OCI-LY7 (cell line): ENCODE measurements at regions of chr6 and their contacts with region 1.

Region 1: GRCh38 chr6:16514249-16514648 is 247.0 kb downstream of the ATXN1 start:
- DNase-seq: no peak
- H3K4me3 ChIP-seq: no peak overlapping the region
- H3K27ac ChIP-seq: no peak overlapping the region
- H3K4me1 ChIP-seq: no peaks in the 10 kb centered on the region
- CTCF ChIP-seq: peak; percentile 56

Region 2: DNA sequence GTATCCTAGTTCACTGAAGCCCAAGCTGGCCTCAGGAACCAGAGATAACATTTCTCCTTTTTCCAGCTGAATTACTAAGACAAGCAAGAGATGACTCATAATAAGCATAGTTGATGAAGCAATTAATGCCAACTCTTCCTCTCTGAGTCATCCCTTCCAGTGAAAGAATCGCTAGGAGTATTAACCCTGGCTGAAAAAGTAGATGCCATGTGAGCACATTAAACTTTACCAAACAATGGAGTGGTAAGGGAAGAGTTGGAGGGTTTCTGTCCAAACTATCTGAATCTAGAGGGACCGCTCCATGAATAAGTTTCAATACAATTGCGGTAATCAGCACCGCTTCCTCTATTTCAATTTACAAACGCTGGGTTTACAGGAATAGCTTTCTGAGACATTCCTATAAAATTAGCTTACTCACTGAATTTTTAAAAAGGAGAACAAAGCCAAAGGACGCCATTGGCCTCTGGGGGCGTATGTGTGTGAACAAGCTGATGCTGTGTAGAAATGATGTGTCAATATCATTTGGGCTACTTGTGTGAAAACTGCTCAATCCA is 198.8 kb after region 1 on chr6:
- CTCF ChIA-PET with region 1: no interaction called
- POLR2A ChIA-PET with region 1: no interaction called
- intact Hi-C with region 1: loop called (anchors 5 kb)
- DNase-seq: no peak
- H3K4me3 ChIP-seq: no peak overlapping the region
- H3K27ac ChIP-seq: no peak overlapping the region
- H3K4me1 ChIP-seq: no peaks in the 10 kb centered on the region
- CTCF ChIP-seq: peak; percentile 42; the same call in 1 of the 2 replicates

Region 3: DNA sequence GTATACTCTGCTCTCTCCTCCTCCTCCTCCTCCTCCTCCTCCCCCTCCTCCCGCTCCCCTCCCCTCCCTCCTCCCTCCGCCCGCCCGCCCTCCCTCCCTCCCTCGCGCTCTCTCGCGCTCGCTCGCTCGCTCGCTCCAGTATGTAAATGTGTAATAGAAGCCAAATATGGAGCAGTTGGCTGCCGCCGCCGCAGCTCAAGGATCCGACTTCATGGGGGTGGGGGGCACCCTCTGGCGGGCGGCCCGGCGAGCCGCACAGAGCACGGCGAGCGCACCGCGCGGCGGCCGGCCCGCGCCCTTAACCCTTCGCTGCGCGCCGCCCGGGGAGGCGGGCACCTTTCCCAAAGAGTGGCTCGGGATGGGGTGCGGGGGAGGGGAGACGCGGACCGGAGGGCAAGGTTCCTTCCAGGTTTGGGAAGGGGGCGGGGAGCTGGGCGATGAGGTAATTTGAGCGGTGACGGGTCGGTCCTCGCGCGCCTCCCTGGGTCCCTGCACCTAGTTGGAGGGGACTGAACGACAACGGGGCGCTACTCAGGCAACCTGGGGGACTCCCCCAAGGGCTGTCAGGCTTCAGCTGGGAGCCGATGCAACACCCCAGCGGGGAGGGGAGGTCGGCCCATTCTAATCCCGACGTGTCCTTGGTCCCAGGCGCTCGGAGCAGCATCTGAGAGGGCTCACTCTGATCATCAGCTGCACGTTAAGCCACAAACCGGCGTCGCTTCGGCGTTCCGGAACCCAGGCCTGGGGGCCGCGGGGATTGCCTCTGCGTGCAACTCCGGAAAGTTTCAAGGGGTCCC is 247.4 kb after region 1 on chr6:
- CTCF ChIA-PET with region 1: no interaction called
- POLR2A ChIA-PET with region 1: no interaction called
- intact Hi-C with region 1: loop called (anchors 1 kb)
- DNase-seq: no peak
- H3K4me3 ChIP-seq: no peak overlapping the region
- H3K27ac ChIP-seq: no peak overlapping the region
- H3K4me1 ChIP-seq: no peaks in the 10 kb centered on the region
- CTCF ChIP-seq: no peak